ENCODE measurements at regions of chr4 and their contacts with region 1.

Region 1: GRCh38 chr4:42673082-42673425 is 16.1 kb upstream of the ATP8A1 start:
- DNase-seq: no peak
- H3K4me3 Mint-ChIP-seq: peak overlapping the region; percentile 54
- H3K27ac Mint-ChIP-seq: peak overlapping the region; percentile 88
- H3K4me1 Mint-ChIP-seq: peaks cover 33% of the 10 kb centered on the region
- H3K27me3 Mint-ChIP-seq: no peaks in the 10 kb centered on the region

Region 2: DNA sequence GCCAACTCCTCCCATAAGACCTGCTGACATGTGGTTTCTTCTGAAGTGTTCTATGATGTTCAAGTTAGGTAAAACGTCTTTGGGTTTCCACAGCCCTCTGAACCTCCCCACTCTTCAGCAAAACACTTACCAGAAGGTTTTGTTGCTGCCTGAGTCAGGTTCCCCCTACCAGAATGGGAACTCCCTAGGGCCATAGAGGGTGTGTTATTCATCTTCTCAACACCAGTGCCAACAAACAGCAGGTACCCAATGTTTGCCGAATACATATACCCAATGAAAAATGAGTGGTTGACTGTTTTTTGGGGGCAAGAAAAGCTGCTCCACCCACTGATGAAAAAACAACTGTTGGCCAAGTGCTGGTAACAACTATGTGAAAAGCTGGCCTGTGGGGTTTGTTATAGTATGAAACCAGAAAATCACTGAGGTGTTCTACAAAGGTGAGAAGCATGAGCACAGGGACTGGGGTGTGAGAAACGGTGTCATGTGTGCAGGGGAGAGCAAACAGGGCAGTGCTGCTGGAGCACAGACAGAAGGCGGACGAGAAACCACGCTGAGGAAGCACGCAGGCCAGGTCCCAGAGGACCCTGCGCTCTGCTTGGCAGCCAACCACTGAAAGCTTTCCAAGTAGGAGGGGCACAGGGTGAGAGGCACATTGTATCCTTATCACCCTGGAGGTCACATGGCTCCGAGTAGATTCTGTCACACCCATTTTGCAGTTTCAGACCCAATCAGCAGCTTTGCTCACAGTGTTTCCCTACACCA is 45.0 kb before region 1 on chr4:
- intact Hi-C with region 1: loop called (anchors 1 kb)
- DNase-seq: peak; percentile 78
- H3K4me3 Mint-ChIP-seq: peak overlapping the region; percentile 65
- H3K27ac Mint-ChIP-seq: peak overlapping the region; percentile 88
- H3K4me1 Mint-ChIP-seq: peaks cover 29% of the 10 kb centered on the region
- H3K27me3 Mint-ChIP-seq: no peaks in the 10 kb centered on the region

Region 3: DNA sequence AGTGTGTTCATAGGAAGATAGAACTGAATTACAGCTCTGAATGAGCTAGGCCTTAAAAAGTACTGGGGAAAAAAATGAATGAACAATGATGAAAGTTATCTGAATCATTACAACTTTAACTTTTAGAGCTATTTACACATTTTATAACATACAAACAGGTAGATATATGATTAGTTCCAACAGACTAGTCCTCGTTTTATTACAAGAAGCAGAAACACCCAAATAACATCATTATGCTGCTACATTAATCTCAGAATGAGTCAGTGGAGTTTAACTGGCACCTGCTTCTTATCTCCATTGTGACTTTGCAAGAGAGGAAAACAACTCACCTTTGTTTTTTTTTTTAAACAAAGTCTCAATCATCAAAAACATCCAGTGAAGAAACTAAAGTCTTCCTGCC is 31.4 kb before region 1 on chr4:
- intact Hi-C with region 1: loop called (anchors 2 kb)
- DNase-seq: no peak
- H3K4me3 Mint-ChIP-seq: peak overlapping the region; percentile 8
- H3K27ac Mint-ChIP-seq: no peak overlapping the region
- H3K4me1 Mint-ChIP-seq: peaks cover 45% of the 10 kb centered on the region
- H3K27me3 Mint-ChIP-seq: no peaks in the 10 kb centered on the region